ENCODE measurements at regions of chr9 and their contacts with region 1.

Region 1: GRCh38 chr9:6045364-6045763 is 29.9 kb upstream of the RANBP6 start:
- DNase-seq: no peak
- ATAC-seq: no peak
- H3K4me3 ChIP-seq: no peak overlapping the region
- H3K4me3 Mint-ChIP-seq: no peak overlapping the region
- H3K27ac ChIP-seq: no peak overlapping the region
- H3K27ac Mint-ChIP-seq: no peak overlapping the region
- H3K4me1 ChIP-seq: peaks cover 0 to 7% of the 10 kb centered on the region in 2 donors
- H3K4me1 Mint-ChIP-seq: peaks cover 6% of the 10 kb centered on the region
- H3K27me3 ChIP-seq: peaks cover 0 to 6% (median 1%) of the 10 kb centered on the region in 4 experiments
- H3K27me3 Mint-ChIP-seq: peaks cover 19% of the 10 kb centered on the region
- CTCF ChIP-seq: no peak

Region 2: GRCh38 chr9:6024020-6024554 is 21.3 kb before region 1 on chr9:
- CTCF ChIA-PET with region 1: interaction called, 16 read pairs
- POLR2A ChIA-PET with region 1: no interaction called
- intact Hi-C with region 1: no loop called
- DNase-seq: peak; percentile 67
- ATAC-seq: peak; percentile 70
- H3K4me3 ChIP-seq: no peak overlapping the region
- H3K4me3 Mint-ChIP-seq: no peak overlapping the region
- H3K27ac ChIP-seq: no peak overlapping the region
- H3K27ac Mint-ChIP-seq: no peak overlapping the region
- H3K4me1 ChIP-seq: peaks cover 0 to 3% of the 10 kb centered on the region in 2 donors
- H3K4me1 Mint-ChIP-seq: peaks cover 4% of the 10 kb centered on the region
- H3K27me3 ChIP-seq: peaks cover 0 to 6% (median 0%) of the 10 kb centered on the region in 4 experiments
- H3K27me3 Mint-ChIP-seq: peaks cover 17% of the 10 kb centered on the region
- CTCF ChIP-seq: peak; percentile 73

Measured in B cell (primary cell).